ENCODE measurements at regions of chr1 and their contacts with region 1.

Region 1: GRCh38 chr1:66978201-66978600 is 53.4 kb downstream of the MIER1 start:
- DNase-seq: no peak
- ATAC-seq: no peak

Region 2: GRCh38 chr1:66446261-66447001 is 531.8 kb before region 1 on chr1:
- intact Hi-C with region 1: no loop called
- DNase-seq: no peak
- ATAC-seq: peak; percentile 40

Region 3: GRCh38 chr1:66957938-66958337 is 20.3 kb before region 1 on chr1:
- intact Hi-C with region 1: loop called (anchors 2 kb)
- DNase-seq: no peak
- ATAC-seq: no peak

Measured in Right ventricle myocardium inferior (tissue), 1 donor.